ENCODE measurements at regions of chr2 and their contacts with region 1.

Region 1: GRCh38 chr2:62266433-62267038 is 70.6 kb downstream of the B3GNT2 start:
- DNase-seq: no peak
- H3K4me3 ChIP-seq: no peak overlapping the region
- H3K27ac ChIP-seq: no peak overlapping the region
- H3K4me1 ChIP-seq: no peaks in the 10 kb centered on the region
- H3K27me3 ChIP-seq: no peaks in the 10 kb centered on the region
- CTCF ChIP-seq: no peak

Region 2: DNA sequence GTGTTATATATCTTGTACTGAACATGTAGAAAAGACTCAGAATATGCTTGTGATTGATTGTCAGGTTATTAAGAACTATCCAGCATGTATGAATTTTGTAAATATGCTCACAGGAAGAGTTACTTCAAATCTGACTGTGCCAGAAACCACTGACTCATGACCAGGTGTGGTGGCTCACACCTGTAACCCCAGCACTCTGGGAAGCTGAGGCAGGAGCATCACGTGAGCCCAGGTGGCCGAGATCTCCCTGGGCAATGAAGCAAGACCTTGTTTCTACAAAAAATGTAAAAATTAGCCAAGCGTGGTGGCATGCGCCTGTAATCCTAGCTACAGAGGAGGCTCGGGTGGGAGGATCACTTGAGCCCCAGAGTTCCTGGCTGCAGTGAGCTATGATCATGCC is 234.4 kb before region 1 on chr2:
- CTCF ChIA-PET with region 1: no interaction called
- POLR2A ChIA-PET with region 1: no interaction called
- intact Hi-C with region 1: no loop called
- DNase-seq: no peak
- H3K4me3 ChIP-seq: no peak overlapping the region
- H3K27ac ChIP-seq: no peak overlapping the region
- H3K4me1 ChIP-seq: no peaks in the 10 kb centered on the region
- H3K27me3 ChIP-seq: no peaks in the 10 kb centered on the region
- CTCF ChIP-seq: no peak

Region 3: GRCh38 chr2:62254056-62254917 is 12.2 kb before region 1 on chr2:
- CTCF ChIA-PET with region 1: no interaction called
- POLR2A ChIA-PET with region 1: interaction called, 14 read pairs
- intact Hi-C with region 1: no loop called
- DNase-seq: no peak
- H3K4me3 ChIP-seq: no peak overlapping the region
- H3K27ac ChIP-seq: no peak overlapping the region
- H3K4me1 ChIP-seq: no peaks in the 10 kb centered on the region
- H3K27me3 ChIP-seq: no peaks in the 10 kb centered on the region
- CTCF ChIP-seq: no peak

Measured in A673 (cell line).